ENCODE measurements at regions of chr14 and their contacts with region 1.

Region 1: DNA sequence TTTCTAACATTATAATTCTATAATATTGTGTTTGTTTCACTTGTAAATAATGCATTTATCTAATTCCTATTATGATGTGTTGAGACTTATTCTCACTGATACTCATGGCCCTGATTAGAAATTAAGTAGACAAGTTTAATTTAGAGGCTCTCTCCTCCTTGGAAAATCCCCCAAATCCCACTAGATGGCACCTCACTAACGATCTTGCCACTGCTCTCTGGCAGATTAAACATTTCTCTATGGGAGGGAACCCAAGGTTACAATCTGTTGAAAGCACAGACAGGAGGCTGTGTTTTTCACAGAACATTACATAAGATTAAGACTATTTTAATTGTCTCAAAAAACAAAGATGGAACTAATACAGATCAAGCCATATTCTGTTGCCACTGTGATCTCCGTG is 318.7 kb downstream of the LRFN5 start:
- DNase-seq: peak; percentile 28
- ATAC-seq: peak; percentile 74
- H3K4me3 ChIP-seq: no peak overlapping the region
- H3K27ac ChIP-seq: no peak overlapping the region
- H3K4me1 ChIP-seq: no peaks in the 10 kb centered on the region
- H3K27me3 ChIP-seq: no peaks in the 10 kb centered on the region
- CTCF ChIP-seq: peak; percentile 37; the same call in 1 of the 2 replicates
- EP300 ChIP-seq: no peak
- POLR2A ChIP-seq: no peak
- RAD21 ChIP-seq: no peak

Region 2: DNA sequence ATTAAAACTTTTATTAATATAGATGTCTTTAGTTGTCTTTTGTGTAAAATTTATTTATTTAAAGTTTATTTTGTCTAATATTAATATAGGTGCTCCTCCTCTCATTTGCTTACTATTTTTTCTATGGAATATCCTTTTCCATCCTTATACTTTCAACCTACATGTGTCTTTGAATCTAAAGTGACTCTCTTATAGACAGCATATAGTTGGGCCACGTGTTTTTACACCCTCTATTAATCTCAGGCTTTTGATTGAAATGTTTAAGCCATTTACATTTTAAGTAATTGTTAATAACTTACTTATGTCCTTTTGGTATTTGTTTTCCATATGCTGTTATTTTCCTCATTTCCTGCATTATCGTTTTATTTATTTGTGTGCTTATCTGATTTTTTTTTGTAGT is 393.2 kb before region 1 on chr14:
- CTCF ChIA-PET with region 1: no interaction called
- POLR2A ChIA-PET with region 1: no interaction called
- in situ Hi-C with region 1: no loop called
- intact Hi-C with region 1: no loop called
- DNase-seq: no peak
- ATAC-seq: no peak
- H3K4me3 ChIP-seq: no peak overlapping the region
- H3K27ac ChIP-seq: no peak overlapping the region
- H3K4me1 ChIP-seq: no peaks in the 10 kb centered on the region
- H3K27me3 ChIP-seq: no peaks in the 10 kb centered on the region
- CTCF ChIP-seq: no peak
- EP300 ChIP-seq: no peak
- POLR2A ChIP-seq: no peak
- RAD21 ChIP-seq: no peak

Region 3: DNA sequence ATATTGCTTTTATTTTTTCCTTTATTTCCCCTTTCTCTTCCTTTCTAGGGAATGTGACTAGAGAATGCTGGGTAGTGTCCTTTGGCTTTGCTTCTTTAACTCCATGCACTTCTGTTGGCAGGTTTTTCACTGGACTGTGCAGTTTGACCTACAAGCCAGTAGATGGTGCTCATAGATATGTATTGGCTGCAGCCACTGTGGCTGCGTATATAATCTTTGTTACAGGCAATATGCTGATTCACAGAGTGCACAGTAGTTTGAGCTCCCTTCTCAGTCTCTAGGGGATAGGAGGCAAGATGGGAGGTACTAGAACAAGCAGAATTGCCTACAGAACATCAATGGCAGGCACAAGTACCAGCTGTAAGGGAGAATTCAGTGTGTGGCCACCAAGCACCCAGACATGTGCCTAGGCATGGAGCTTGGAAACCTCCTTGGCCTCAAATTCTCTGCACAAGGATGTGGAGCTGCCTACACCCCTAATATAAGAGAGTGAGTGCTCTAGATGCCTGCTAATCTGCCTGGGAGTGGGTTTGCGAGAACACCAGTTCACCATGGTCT is 184.8 kb after region 1 on chr14:
- CTCF ChIA-PET with region 1: no interaction called
- POLR2A ChIA-PET with region 1: no interaction called
- in situ Hi-C with region 1: no loop called
- intact Hi-C with region 1: loop called (anchors 10 kb)
- DNase-seq: peak; percentile 27
- ATAC-seq: peak; percentile 76
- H3K4me3 ChIP-seq: no peak overlapping the region
- H3K27ac ChIP-seq: no peak overlapping the region
- H3K4me1 ChIP-seq: no peaks in the 10 kb centered on the region
- H3K27me3 ChIP-seq: no peaks in the 10 kb centered on the region
- CTCF ChIP-seq: peak; percentile 43
- EP300 ChIP-seq: no peak
- POLR2A ChIP-seq: no peak
- RAD21 ChIP-seq: no peak